ENCODE measurements at regions of chr19 and their contacts with region 1.

Region 1: DNA sequence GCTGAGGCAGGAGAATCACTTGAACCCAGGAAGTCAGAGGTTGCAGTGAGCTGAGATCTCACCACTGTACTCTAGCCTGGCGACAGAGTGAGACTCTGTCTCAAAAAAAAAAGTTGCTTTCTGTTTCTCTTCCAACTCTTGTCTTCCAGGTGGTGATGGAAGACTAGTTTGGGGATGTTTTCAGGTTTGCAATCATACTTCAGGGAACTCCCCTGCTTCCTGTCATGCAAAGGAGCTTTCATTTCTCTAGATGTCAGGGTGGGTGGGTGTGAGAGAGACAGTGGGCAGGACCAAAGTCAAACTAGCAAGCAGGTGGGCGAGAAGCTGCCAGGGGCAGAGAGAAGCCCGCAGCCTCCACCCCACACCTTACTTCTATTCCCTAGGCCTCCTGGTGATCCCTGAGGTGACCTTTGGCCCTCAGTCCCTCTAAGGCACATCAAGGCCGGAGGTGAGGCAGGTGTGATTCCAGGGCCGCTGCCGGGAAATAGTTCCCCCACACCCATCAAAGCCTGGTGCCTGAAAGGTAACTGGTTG is 25.7 kb downstream of the CCNE1 start:
- DNase-seq: peak in 8 of 9 donors; percentile 55 to 84 (median 76)
- ATAC-seq: peak; percentile 97
- H3K4me3 ChIP-seq: no peak overlapping the region
- H3K4me3 Mint-ChIP-seq: peak overlapping the region; percentile 61 to 86 (median 76)
- H3K27ac ChIP-seq: peak overlapping the region; percentile 71
- H3K27ac Mint-ChIP-seq: peak overlapping the region; percentile 86 to 99 (median 98)
- H3K4me1 ChIP-seq: peaks cover 10 to 38% of the 10 kb centered on the region in 2 donors
- H3K4me1 Mint-ChIP-seq: peaks cover 25 to 55% (median 48%) of the 10 kb centered on the region in 7 donors
- H3K27me3 ChIP-seq: no peaks in the 10 kb centered on the region
- H3K27me3 Mint-ChIP-seq: peaks cover 0 to 1% (median 0%) of the 10 kb centered on the region in 5 donors

Region 2: DNA sequence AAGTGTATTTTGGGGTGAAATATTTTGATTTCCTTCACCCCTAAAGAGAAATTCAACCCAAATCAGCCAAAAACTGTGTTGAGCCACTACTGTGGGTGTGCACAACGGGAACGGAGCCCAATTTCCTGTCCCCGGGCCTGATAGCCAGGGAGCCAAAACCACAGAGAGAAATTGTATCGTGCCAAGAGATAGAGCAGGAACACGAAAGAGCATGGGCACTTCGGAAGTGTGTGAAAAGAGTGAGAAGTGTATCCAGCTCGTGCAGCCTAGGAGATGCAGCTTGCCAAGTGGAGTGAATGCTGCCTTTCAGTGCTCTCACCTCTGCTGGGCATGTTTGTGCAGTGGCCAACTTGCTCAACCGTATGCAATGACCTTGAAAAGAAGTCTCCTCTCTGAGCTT is 191.6 kb before region 1 on chr19:
- CTCF ChIA-PET with region 1: no interaction called
- POLR2A ChIA-PET with region 1: no interaction called
- intact Hi-C with region 1: no loop called
- DNase-seq: no peak
- ATAC-seq: no peak
- H3K4me3 ChIP-seq: no peak overlapping the region
- H3K4me3 Mint-ChIP-seq: peak overlapping the region in 8 of 10 donors; percentile 17 to 69 (median 59)
- H3K27ac ChIP-seq: no peak overlapping the region
- H3K27ac Mint-ChIP-seq: peak overlapping the region in 8 of 9 donors; percentile 25 to 82 (median 50)
- H3K4me1 ChIP-seq: peaks cover 0 to 12% of the 10 kb centered on the region in 2 donors
- H3K4me1 Mint-ChIP-seq: peaks cover 15 to 22% (median 19%) of the 10 kb centered on the region in 7 donors
- H3K27me3 ChIP-seq: no peaks in the 10 kb centered on the region
- H3K27me3 Mint-ChIP-seq: peaks cover 0 to 6% (median 0%) of the 10 kb centered on the region in 5 donors

Region 3: DNA sequence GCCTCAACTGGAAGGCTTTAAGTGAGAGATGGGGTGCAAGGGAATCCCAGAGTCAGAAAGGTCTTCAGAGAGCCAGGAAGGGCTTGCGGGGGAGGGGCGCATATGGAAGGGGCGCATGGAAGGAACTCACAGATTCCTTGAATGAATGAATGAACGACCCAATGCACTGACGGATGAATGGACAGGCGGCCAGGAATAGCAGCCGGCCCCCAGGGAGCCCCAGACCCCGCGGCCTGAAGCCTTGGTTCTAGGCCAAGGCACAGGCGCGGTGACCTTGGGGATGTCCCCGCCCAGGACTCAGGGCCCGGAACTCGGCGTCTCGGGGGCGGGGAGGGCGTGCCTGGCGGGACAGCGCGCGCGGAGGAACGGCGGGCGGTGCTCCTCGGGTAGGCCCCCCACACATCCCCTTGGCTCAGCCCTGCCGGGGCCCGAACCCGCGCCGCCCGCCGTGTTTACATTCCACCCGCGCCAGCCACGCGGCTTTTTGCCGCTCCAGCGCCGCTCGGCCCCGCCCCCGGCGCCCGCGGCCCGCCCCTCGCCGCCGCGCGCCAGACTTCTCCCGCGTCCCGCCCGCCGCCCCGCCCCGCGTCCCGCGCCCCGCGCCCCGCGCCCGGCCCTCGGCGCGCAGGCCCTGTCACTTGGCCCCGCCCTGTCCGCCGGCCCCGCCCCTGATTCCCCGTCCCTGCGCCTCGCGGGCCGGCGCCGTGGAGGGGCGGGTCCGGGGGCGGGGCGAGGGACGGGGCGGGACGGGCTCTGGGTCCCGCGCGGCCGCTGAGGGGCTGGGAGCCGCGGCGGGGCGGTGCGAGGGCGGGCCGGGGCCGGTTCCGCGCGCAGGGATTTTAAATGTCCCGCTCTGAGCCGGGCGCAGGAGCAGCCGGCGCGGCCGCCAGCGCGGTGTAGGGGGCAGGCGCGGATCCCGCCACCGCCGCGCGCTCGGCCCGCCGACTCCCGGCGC is 26.1 kb before region 1 on chr19 and contains the start of gene CCNE1:
- CTCF ChIA-PET with region 1: no interaction called
- POLR2A ChIA-PET with region 1: interaction called, 6 read pairs
- intact Hi-C with region 1: loop called in 1 of 2 experiments (anchors 1 kb)
- DNase-seq: peak; percentile 85 to 98 (median 91)
- ATAC-seq: peak; percentile 98
- H3K4me3 ChIP-seq: peak within 1 kb of the TSS; percentile 48
- H3K4me3 Mint-ChIP-seq: peak within 1 kb of the TSS; percentile 83 to 96 (median 90)
- H3K27ac ChIP-seq: peak within 1 kb of the TSS; percentile 69
- H3K27ac Mint-ChIP-seq: peak within 1 kb of the TSS; percentile 56 to 94 (median 85)
- H3K4me1 ChIP-seq: no peaks in the 10 kb centered on the region
- H3K4me1 Mint-ChIP-seq: peaks cover 0 to 36% (median 11%) of the 10 kb centered on the region in 7 donors
- H3K27me3 ChIP-seq: no peaks in the 10 kb centered on the region
- H3K27me3 Mint-ChIP-seq: no peaks in the 10 kb centered on the region
- total RNA-seq, gene CCNE1: 5.3 to 36.1 (median 6.6) TPM

Measured in naive thymus-derived CD4-positive, alpha-beta T cell (primary cell).